Heart left ventricle (tissue), 16 donors: ENCODE measurements at regions of chr13 and their contacts with region 1.

Region 1: GRCh38 chr13:28401303-28402056 is 93.4 kb downstream of the FLT1 start:
- DNase-seq: no peak
- ATAC-seq: peak in 2 of 4 donors; percentile 47 to 74
- H3K4me3 ChIP-seq: no peak overlapping the region
- H3K27ac ChIP-seq: peak overlapping the region in 9 of 12 donors; percentile 6 to 59 (median 34)
- H3K4me1 ChIP-seq: peaks cover 0 to 55% (median 21%) of the 10 kb centered on the region in 12 donors
- H3K27me3 ChIP-seq: no peaks in the 10 kb centered on the region
- CTCF ChIP-seq: no peak
- POLR2A ChIP-seq: no peak

Region 2: DNA sequence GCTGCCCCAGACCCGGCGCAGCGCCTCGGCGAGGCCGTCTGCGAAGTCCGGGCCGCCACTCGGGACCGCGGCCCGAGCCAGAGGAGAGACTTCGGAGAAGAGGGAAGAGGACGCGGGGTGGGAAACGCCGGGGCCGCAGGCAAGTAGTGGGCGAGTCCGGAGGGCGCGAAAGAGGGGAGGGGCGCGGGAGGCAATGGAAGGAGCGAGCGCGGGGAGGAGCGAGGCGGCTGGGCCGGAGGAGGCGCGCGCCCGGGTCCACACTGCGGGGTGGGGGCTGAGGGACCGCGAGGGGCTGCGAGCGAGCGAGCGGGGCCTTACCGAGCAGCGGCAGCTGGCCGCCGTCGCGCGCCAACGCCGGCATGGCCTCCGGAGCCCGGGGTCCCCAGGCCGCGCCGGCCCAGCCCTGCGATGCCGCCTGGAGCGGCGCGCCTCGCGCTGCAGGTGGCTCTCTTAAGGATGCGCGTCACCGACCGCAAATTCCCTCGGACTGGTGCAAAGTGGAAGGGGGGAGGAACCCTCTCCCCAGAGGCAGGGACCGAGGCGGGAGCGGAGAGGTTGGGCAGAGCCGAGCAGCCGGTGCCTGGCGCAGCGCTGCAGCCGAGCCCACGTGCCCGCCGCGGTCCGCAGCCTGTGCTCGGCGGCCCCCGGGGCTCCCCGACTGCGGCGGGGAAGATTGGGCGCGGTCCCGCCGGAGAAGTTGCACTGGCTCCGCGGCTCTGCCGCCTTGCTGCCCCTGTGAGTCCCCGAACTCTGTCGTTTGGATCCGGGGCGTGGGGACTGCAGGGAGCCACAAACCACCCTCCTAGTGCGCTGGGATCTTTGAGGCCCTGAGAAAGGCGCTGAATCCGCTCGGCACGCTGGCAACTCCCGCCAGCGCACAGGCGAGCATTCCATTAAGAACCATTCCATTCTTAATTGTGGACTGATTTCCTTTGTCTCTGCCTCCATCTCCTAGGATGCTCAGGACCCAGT is 301.0 kb before region 1 on chr13 and contains the start of gene FLT3:
- intact Hi-C with region 1: no loop called
- DNase-seq: peak in 4 of 5 donors; percentile 21 to 67 (median 26)
- ATAC-seq: peak in 3 of 4 donors; percentile 18 to 61 (median 22)
- H3K4me3 ChIP-seq: peak within 1 kb of the TSS; percentile 11 to 63 (median 42)
- H3K27ac ChIP-seq: no peak within 1 kb of the TSS
- H3K4me1 ChIP-seq: peaks cover 0 to 27% (median 8%) of the 10 kb centered on the region in 12 donors
- H3K27me3 ChIP-seq: peaks cover 29 to 93% (median 60%) of the 10 kb centered on the region in 9 donors
- CTCF ChIP-seq: no peak
- POLR2A ChIP-seq: no peak
- total RNA-seq, gene FLT3: 0.09 to 0.48 (median 0.23) TPM in 7 of 9 donors, not detected in the others

Region 3: DNA sequence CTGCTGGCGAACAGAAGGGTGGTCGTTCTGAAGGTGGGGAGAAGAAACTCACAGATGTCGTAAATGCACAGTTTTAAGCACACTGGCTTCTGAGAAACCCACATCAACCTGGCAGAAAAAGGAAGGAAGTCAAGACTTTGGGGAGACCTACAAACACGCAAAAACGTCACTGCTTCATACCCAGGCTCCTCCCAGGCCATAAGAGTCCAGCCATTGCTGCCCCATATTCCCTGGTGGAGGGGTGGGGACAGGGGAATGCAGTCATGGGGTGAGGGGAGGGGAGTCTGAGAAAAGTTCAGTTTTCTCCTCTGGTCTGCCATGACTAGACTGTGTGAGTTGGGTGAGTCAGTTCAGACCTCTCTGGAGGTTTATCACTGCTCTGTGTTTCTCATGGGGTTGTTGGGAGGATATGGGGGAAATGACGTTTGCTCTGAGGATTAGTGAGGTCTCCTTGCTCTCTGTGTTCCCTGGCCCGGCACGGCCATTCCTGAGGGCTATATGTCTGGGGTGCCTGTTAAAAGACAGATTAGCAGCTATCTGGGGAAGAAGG is 45.6 kb before region 1 on chr13:
- intact Hi-C with region 1: no loop called
- DNase-seq: no peak
- ATAC-seq: peak in 3 of 4 donors; percentile 7 to 71 (median 40)
- H3K4me3 ChIP-seq: no peak overlapping the region
- H3K27ac ChIP-seq: peak overlapping the region in 1 of 12 donors; percentile 1
- H3K4me1 ChIP-seq: peaks cover 0 to 41% (median 19%) of the 10 kb centered on the region in 12 donors
- H3K27me3 ChIP-seq: peaks cover 0 to 11% (median 0%) of the 10 kb centered on the region in 9 donors
- CTCF ChIP-seq: no peak
- POLR2A ChIP-seq: no peak

Region 4: GRCh38 chr13:28442839-28443238 is 41.4 kb after region 1 on chr13:
- intact Hi-C with region 1: loop called in 1 of 10 experiments (anchors 2 kb)
- DNase-seq: peak in 2 of 5 donors; percentile 26 to 38
- ATAC-seq: peak in 3 of 4 donors; percentile 73 to 87 (median 84)
- H3K4me3 ChIP-seq: no peak overlapping the region
- H3K27ac ChIP-seq: peak overlapping the region in 5 of 12 donors; percentile 1 to 35 (median 17)
- H3K4me1 ChIP-seq: peaks cover 0 to 37% (median 20%) of the 10 kb centered on the region in 12 donors
- H3K27me3 ChIP-seq: no peaks in the 10 kb centered on the region
- CTCF ChIP-seq: no peak
- POLR2A ChIP-seq: no peak

Region 5: GRCh38 chr13:28527411-28528028 is 126.0 kb after region 1 on chr13:
- intact Hi-C with region 1: no loop called
- DNase-seq: no peak
- ATAC-seq: no peak
- H3K4me3 ChIP-seq: no peak overlapping the region
- H3K27ac ChIP-seq: no peak overlapping the region
- H3K4me1 ChIP-seq: peaks cover 0 to 42% (median 10%) of the 10 kb centered on the region in 12 donors
- H3K27me3 ChIP-seq: peaks cover 0 to 27% (median 11%) of the 10 kb centered on the region in 9 donors
- CTCF ChIP-seq: no peak
- POLR2A ChIP-seq: no peak